ENCODE measurements at regions of chr17 and their contacts with region 1.

Region 1: DNA sequence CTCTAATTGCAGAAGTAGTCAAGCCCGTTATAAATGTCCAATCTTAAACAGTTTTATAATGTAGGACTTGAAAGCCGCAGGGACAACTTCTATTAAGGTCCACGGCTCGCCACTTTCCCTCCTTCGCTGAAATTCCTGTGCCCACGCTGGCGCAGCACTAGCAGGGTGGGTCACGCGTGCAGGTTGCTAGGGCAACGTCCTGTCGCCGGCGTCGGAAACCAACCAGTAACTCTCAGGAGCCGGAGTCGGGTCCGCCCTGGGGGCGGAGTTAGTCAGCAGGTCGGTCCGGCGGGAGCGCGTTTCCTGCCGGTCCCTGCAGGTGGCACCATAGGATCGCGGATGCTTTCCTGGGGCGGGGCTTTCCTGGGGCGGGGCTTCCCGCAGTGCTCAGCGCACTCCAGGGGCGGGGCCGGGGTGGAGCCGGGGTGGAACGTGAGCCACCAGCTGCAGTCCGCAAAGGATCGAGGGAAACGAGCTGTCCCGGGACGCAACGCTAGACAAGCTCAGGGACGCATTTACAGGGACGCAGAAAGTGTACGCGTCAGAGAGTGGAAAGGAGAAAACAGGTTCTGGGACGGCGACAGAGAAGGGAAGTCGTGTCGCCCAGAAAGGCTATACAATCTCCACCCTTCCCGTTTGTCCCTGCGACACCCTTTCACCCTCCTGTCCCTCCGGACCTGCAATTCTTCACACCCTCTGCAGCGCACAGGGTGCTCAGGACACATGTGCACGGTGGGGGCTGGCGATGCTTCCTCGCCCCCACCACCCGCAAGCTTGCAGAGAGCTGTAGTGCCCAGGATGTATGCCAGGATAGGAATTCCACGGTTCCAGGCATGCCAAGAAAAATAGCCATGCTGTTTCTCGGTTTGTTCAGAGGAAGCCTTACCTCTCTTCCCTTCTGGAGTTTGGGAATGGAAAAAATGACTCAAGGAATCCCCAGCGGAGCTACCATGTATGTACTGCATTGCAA is 12.4 kb downstream of the COPZ2 start:
- DNase-seq: peak; percentile 98
- ATAC-seq: peak; percentile 91
- H3K4me3 Mint-ChIP-seq: peak overlapping the region; percentile 84
- H3K27ac Mint-ChIP-seq: peak overlapping the region; percentile 78
- H3K4me1 Mint-ChIP-seq: peaks cover 36% of the 10 kb centered on the region
- H3K27me3 Mint-ChIP-seq: peaks cover 16% of the 10 kb centered on the region

Region 2: GRCh38 chr17:47949136-47949759 is 76.0 kb before region 1 on chr17:
- CTCF ChIA-PET with region 1: interaction called, 102 read pairs
- DNase-seq: peak; percentile 90
- ATAC-seq: peak; percentile 80
- H3K4me3 Mint-ChIP-seq: peak overlapping the region; percentile 55
- H3K27ac Mint-ChIP-seq: peak overlapping the region; percentile 78
- H3K4me1 Mint-ChIP-seq: peaks cover 40% of the 10 kb centered on the region
- H3K27me3 Mint-ChIP-seq: no peaks in the 10 kb centered on the region

Region 3: GRCh38 chr17:48037036-48037837 is 12.0 kb after region 1 on chr17 and contains the start of gene COPZ2:
- CTCF ChIA-PET with region 1: interaction called, 99 read pairs
- DNase-seq: peak; percentile 74
- ATAC-seq: peak; percentile 86
- H3K4me3 Mint-ChIP-seq: peak within 1 kb of the TSS; percentile 76
- H3K27ac Mint-ChIP-seq: peak within 1 kb of the TSS; percentile 47
- H3K4me1 Mint-ChIP-seq: peaks cover 14% of the 10 kb centered on the region
- H3K27me3 Mint-ChIP-seq: peaks cover 38% of the 10 kb centered on the region
- total RNA-seq, gene COPZ2: 5.4 to 14.1 TPM

Region 4: GRCh38 chr17:48062273-48062672 is 37.1 kb after region 1 on chr17:
- CTCF ChIA-PET with region 1: interaction called, 28 read pairs
- DNase-seq: no peak
- ATAC-seq: no peak
- H3K4me3 Mint-ChIP-seq: no peak overlapping the region
- H3K27ac Mint-ChIP-seq: no peak overlapping the region
- H3K4me1 Mint-ChIP-seq: no peaks in the 10 kb centered on the region
- H3K27me3 Mint-ChIP-seq: no peaks in the 10 kb centered on the region

Region 5: GRCh38 chr17:48095611-48096010 is 70.4 kb after region 1 on chr17:
- CTCF ChIA-PET with region 1: interaction called, 15 read pairs
- DNase-seq: no peak
- ATAC-seq: no peak
- H3K4me3 Mint-ChIP-seq: no peak overlapping the region
- H3K27ac Mint-ChIP-seq: no peak overlapping the region
- H3K4me1 Mint-ChIP-seq: peaks cover 24% of the 10 kb centered on the region
- H3K27me3 Mint-ChIP-seq: no peaks in the 10 kb centered on the region

Region 6: DNA sequence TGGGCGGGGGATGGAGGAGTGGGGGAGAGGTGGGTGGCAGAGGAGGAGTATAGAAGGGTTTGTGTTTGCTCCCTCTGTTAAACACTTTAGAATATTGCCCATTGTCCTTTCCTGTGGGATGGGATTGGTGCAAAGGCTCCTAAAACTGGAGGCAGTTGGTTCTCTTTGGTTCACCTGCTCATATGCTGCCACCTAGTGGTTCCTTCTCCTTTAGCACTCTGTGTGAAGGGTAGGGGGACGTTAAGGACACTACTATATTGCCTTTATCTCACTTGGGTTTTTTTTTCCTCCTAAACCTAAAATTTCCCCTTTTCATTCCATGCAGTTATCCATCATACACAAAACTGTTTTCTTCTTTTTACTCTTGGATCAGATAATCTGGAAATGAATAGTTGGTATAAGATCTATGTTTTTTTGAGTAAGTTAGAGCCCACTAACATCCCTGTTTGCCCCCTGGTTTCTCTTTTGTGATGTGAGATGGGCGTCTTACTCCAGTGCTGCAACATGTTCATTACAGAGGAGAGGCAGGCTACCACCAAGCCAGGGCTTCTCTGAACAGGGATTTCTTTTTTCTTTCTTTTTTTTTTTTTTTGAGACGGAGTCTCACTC is 106.1 kb after region 1 on chr17:
- CTCF ChIA-PET with region 1: interaction called, 33 read pairs
- DNase-seq: peak; percentile 57
- ATAC-seq: peak; percentile 67
- H3K4me3 Mint-ChIP-seq: no peak overlapping the region
- H3K27ac Mint-ChIP-seq: no peak overlapping the region
- H3K4me1 Mint-ChIP-seq: no peaks in the 10 kb centered on the region
- H3K27me3 Mint-ChIP-seq: no peaks in the 10 kb centered on the region

Region 7: DNA sequence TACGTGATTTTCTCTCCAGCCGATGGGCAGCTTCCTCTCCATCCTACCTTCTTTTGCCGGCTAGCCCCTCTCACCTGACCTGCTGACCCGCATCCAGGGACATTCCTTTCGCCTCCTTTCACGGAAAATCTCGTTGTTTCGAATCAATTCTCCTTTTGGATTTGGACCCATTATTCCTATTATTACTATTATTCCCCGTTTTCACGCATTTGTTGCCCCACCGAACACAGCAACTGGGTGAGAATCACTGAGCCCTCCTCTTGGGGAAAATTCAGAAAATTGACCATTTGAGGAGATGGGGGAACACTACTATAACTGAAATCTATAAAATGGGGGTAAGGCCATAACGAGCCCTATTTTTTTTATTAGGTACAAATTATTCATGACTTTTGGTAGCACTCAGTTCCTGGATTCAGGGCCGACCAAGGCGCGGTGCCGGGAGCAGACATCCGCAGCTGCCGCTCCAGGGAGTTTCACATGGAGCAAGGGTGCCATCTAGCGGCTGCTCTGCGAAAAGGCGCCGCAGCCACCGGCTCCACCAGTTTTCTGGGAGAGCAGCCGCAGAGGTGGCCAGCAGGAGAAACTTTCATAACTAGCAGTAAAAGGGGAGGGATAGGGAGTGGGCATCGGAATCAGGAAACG is 593.2 kb after region 1 on chr17:
- CTCF ChIA-PET with region 1: interaction called, 17 read pairs
- DNase-seq: peak; percentile 86
- ATAC-seq: peak; percentile 76
- H3K4me3 Mint-ChIP-seq: peak overlapping the region; percentile 31
- H3K27ac Mint-ChIP-seq: peak overlapping the region; percentile 36
- H3K4me1 Mint-ChIP-seq: peaks cover 34% of the 10 kb centered on the region
- H3K27me3 Mint-ChIP-seq: peaks cover 96% of the 10 kb centered on the region